ENCODE measurements at regions of chr1 and their contacts with region 1.

Region 1: DNA sequence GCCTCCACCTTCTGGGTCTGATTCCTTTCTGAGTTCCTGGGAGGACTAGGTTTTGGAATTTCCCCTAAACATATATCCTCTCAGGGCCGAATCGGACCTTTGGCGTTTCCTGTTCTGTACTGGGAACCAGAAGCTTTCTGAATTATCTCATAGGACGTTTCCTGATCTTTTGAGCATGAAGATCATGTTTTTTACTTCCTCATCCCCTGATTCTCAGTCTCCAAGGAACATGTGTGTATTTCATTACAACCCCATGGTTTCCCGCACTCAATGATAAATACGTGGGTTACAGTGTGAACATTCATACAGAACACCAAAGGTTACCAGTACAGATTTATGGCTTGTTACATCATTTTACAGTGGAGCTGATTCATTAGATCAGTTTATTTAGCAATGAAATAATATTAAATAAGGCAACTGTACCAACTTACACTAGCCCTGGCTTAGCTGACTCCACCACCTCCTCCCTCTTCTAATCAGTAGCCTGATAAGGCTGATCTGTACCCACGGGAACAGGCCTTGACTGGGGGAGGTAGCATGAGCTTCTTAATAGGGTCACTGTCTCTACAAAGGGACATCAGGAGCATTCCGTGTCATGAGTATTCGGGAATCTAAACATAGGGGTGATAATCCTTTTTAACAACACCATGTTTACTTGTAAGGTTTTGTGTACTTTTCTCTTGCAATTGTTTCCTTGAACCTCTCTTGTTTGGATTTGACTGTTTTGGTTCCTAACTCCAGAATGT is 57.8 kb upstream of the ERRFI1 start:
- DNase-seq: no peak
- ATAC-seq: peak; percentile 33 to 79 (median 45)
- H3K4me3 ChIP-seq: no peak overlapping the region
- H3K27ac ChIP-seq: peak overlapping the region in 10 of 12 donors; percentile 26 to 77 (median 70)
- H3K4me1 ChIP-seq: peaks cover 0 to 36% (median 18%) of the 10 kb centered on the region in 12 donors
- H3K27me3 ChIP-seq: no peaks in the 10 kb centered on the region
- CTCF ChIP-seq: no peak
- POLR2A ChIP-seq: no peak

Region 2: GRCh38 chr1:8116893-8117264 is 33.0 kb after region 1 on chr1:
- intact Hi-C with region 1: loop called in 3 of 10 experiments (anchors 5 kb)
- DNase-seq: peak; percentile 68 to 81 (median 75)
- ATAC-seq: peak; percentile 84 to 93 (median 90)
- H3K4me3 ChIP-seq: peak overlapping the region in 2 of 12 donors; percentile 23 to 31
- H3K27ac ChIP-seq: peak overlapping the region; percentile 54 to 89 (median 70)
- H3K4me1 ChIP-seq: peaks cover 0 to 59% (median 33%) of the 10 kb centered on the region in 12 donors
- H3K27me3 ChIP-seq: no peaks in the 10 kb centered on the region
- CTCF ChIP-seq: no peak
- POLR2A ChIP-seq: no peak

Measured in heart left ventricle (tissue), 16 donors.